Esophagus muscularis mucosa (tissue), 4 donors: ENCODE measurements at regions of chr1 and their contacts with region 1.

Region 1: DNA sequence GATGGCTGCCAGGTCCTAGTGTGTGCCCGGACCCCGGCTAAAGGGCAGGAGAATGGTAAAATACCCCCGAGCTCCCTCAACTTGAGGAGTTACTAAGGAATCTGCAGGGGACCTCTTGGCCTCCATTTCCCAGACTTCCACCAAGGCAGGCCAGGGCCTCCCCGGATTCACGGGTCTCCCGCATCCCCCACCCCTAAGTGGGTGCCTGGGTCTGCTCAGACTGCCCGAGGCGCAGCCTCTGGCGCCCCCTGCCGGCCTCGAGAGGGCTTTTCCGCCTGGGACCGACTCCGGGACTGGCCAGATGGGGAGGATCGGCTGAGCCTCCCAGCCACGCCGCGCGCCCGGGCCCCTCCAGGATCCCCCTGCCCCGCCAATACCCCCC is 1.7 kb downstream of the PLEKHG5 start:
- DNase-seq: no peak
- H3K4me3 ChIP-seq: peak overlapping the region; percentile 68 to 79 (median 69)
- H3K27ac ChIP-seq: peak overlapping the region in 1 of 4 donors; percentile 79
- H3K4me1 ChIP-seq: peaks cover 56 to 60% (median 58%) of the 10 kb centered on the region in 4 donors
- H3K27me3 ChIP-seq: peaks cover 8 to 45% (median 15%) of the 10 kb centered on the region in 4 donors
- CTCF ChIP-seq: peak in 2 of 3 experiments; percentile 74 to 80
- EP300 ChIP-seq: no peak
- POLR2A ChIP-seq: no peak

Region 2: DNA sequence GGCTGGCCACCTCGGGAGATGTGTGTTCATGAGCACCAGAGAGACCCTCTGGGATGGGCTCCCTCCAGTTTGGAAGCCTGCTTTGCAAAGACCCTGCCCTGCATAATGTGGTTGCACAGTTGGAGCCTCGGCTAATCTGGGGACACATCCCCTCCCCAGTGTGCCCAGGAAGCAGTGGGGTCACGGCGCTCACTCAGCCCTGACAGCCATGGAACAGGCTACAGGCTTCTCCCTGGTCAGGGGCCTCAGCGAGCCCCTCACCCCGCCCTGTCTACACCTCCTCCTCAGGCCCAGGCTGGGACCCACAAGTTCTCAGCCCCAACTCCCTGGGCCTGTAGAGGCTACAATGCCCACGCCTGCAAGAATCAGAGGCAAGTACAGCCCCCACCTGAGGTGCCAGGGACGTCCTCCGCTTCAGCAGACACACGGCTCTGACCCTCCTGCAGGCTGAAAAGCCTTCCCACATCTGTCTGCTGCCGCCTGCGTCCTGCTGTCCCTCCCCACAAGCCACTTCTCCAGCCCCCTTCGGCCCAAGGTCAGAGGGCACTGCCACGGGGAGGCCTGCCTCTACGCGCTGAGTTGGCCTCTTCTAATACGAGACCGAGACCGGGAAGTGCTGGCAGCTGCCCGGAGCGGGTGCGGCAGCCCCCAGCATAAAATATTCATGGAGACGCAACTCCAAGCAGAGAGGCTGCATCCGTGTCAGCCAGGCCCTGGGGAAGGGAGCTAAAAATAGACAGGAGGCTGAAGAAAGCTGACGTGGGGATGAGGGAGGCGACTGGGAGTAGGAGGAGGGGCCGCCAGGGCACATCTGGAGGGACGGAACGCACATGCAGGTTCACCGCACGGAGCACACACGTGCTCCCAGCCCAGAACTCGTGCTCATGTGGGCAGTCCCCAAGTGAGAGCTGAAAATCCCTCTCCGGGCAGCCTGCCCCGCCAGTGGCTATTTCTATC is 213.7 kb before region 1 on chr1:
- intact Hi-C with region 1: no loop called
- DNase-seq: no peak
- H3K4me3 ChIP-seq: peak overlapping the region in 3 of 4 donors; percentile 6 to 39 (median 14)
- H3K27ac ChIP-seq: peak overlapping the region; percentile 65 to 79 (median 69)
- H3K4me1 ChIP-seq: peaks cover 14 to 35% (median 25%) of the 10 kb centered on the region in 4 donors
- H3K27me3 ChIP-seq: no peaks in the 10 kb centered on the region
- CTCF ChIP-seq: no peak
- EP300 ChIP-seq: no peak
- POLR2A ChIP-seq: no peak

Region 3: GRCh38 chr1:6438047-6438525 is 51.7 kb before region 1 on chr1:
- intact Hi-C with region 1: no loop called
- DNase-seq: no peak
- H3K4me3 ChIP-seq: no peak overlapping the region
- H3K27ac ChIP-seq: no peak overlapping the region
- H3K4me1 ChIP-seq: peaks cover 0 to 11% (median 10%) of the 10 kb centered on the region in 4 donors
- H3K27me3 ChIP-seq: peaks cover 0 to 72% (median 27%) of the 10 kb centered on the region in 4 donors
- CTCF ChIP-seq: peak; percentile 75 to 96 (median 84)
- EP300 ChIP-seq: no peak
- POLR2A ChIP-seq: no peak

Region 4: DNA sequence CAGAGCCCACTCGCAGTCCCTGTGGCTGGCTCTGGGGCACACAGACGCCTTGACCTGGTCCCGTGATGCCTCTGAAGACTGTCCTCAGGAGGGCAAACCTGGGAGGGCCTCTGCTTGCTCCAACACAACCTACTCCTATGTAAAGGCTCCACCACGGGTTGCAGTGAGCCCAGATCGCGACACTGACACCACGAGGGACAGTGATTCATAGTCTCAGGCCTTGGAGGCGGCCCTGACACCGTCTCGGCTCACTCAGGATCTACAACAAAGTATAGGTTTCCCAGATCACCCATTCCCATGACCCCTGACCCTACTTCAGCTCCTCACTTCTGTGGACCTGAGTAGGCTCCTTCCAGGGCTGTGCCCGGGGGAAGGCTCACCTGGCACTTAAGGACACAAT is 36.5 kb after region 1 on chr1:
- intact Hi-C with region 1: no loop called
- DNase-seq: no peak
- H3K4me3 ChIP-seq: no peak overlapping the region
- H3K27ac ChIP-seq: no peak overlapping the region
- H3K4me1 ChIP-seq: no peaks in the 10 kb centered on the region
- H3K27me3 ChIP-seq: no peaks in the 10 kb centered on the region
- CTCF ChIP-seq: no peak
- EP300 ChIP-seq: no peak
- POLR2A ChIP-seq: no peak

Region 5: GRCh38 chr1:6646499-6647148 is 156.8 kb after region 1 on chr1:
- intact Hi-C with region 1: loop called (anchors 5 kb)
- DNase-seq: no peak
- H3K4me3 ChIP-seq: no peak overlapping the region
- H3K27ac ChIP-seq: no peak overlapping the region
- H3K4me1 ChIP-seq: no peaks in the 10 kb centered on the region
- H3K27me3 ChIP-seq: no peaks in the 10 kb centered on the region
- CTCF ChIP-seq: peak; percentile 52 to 64 (median 63)
- EP300 ChIP-seq: no peak
- POLR2A ChIP-seq: no peak